HEK293 (cell line): ENCODE measurements at regions of chr11 and their contacts with region 1.

Region 1: DNA sequence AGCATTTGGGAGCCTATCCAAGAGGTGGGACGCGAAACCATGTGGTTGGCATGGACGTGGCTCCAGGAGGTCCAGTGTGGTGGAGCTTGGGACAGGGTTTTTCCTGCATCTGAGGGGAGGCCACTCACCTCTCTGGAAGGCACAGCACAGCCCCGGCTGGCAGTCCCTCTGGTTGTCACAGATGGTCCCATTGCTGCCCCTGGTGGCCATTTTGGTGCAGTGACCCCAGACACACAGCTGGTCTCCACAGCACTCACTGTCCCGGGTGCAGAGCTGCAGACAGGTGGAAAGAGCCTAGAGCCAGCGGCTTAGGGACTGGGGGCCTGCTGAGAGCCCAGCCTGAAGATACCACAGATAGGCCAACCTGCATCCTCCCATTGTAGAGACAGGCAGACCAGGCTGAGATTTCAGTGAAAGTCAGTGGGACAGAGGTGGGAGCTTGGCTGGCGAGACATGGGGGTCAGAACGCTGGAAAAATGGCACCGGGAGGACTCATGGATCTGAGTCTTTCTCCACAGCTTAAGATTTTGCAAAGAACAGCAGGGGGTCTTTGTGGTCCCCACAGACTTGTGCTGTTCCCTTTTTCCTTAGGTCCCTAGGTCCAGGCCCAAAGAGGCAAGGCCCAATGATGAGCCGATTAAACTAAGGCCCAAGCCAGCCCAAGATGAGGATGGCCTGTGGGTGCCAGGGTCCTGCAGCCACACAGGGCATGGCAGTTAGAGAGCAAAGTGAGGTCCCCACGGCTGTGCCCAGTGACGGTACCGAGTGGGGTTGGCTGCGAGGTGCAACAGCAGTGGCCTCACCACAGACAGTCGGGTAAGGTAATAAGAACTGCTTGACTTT is 41.4 kb downstream of the DKK3 start:
- H3K4me3 ChIP-seq: no peak overlapping the region
- H3K27ac ChIP-seq: no peak overlapping the region
- H3K4me1 ChIP-seq: no peaks in the 10 kb centered on the region
- CTCF ChIP-seq: peak; percentile 72

Region 2: DNA sequence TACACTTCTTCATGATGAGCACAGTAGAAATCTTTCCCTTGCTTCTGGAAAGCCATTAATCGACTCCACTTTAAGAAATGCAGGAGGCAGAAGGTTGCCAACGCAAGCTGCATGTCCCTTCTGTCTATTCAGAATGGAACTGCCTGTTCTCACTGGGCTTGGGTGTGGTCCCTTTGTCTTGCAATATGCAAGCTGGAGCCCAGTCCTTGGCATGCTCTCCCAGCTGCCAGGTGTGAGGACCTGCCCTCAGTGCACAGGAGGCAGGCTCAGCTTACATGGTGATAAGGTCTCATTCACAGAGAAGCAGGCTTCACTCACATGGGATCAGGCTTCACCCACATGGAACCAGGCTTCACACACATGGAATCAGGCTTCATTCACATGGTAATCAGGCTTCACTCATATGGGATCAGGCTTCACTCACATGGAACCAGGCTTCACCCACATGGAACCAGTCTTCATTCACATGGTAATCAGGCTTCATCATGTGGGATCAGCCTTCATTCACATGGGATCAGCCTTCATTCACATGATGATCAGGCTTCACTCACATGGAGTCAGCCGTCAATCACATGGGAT is 184.4 kb before region 1 on chr11:
- CTCF ChIA-PET with region 1: no interaction called
- POLR2A ChIA-PET with region 1: no interaction called
- H3K4me3 ChIP-seq: no peak overlapping the region
- H3K27ac ChIP-seq: no peak overlapping the region
- H3K4me1 ChIP-seq: no peaks in the 10 kb centered on the region
- CTCF ChIP-seq: no peak

Region 3: DNA sequence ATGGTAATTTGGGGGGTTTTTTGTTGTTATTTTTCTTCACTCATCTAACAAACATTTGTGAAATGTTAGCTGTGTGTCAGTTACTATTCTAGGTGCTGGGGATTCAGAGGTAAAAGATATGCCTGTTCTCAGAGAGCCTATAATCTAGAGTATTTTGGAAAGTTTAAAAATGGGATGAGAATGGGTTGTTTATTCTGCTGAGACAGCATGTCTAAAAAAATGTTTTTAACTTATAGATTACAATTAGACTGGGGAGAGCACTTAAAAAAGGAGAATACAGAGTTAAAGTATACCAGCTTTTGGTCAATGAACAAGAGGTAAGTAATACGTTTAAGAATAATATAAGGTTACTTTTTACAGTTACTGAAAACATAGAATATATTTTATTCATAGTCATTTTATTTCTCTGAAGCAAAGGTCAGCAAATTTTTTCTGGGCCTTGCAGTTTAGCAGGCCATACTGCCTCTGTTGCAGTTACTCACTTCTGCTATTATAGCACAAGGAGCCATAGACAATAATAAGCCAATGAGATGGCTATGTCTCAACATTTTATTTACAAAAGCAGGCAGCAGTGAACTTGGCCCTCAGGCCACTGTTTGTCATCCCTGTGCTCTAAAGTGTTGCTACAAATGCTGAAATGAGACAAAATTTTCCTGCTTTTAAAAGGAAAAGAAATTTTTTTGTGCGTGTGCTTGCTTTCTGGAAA is 18.7 kb before region 1 on chr11:
- CTCF ChIA-PET with region 1: interaction called, 13 read pairs
- POLR2A ChIA-PET with region 1: no interaction called
- H3K4me3 ChIP-seq: no peak overlapping the region
- H3K27ac ChIP-seq: no peak overlapping the region
- H3K4me1 ChIP-seq: no peaks in the 10 kb centered on the region
- CTCF ChIP-seq: no peak

Region 4: GRCh38 chr11:11977206-11977938 is 10.3 kb after region 1 on chr11:
- CTCF ChIA-PET with region 1: interaction called, 57 read pairs
- POLR2A ChIA-PET with region 1: interaction called, 3 read pairs
- H3K4me3 ChIP-seq: no peak overlapping the region
- H3K27ac ChIP-seq: no peak overlapping the region
- H3K4me1 ChIP-seq: no peaks in the 10 kb centered on the region
- CTCF ChIP-seq: no peak

Region 5: DNA sequence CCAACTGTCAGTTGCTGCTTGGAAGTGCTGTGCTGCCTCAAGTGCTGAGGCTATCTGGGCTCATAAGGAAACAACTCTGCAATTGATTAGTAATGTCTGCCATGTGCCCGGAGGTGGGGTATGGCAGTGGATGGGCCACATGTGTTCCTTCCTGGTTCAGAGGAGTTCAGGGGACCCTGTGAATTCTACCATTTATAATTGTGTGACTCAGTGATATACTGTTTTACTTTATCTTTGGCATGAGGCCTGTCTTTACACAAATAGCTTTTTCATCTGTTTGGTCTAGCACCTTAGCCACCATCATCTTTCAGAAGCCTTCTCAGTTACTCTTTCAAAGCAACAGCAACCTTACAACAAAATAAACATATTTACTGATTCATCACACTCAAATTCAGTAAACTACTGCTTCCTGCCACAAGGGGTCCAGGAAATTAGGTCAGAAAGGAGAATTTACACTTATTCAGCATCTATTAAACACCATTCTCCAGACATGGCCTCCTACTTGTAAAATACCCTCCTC is 20.5 kb after region 1 on chr11:
- CTCF ChIA-PET with region 1: interaction called, 13 read pairs
- POLR2A ChIA-PET with region 1: no interaction called
- H3K4me3 ChIP-seq: no peak overlapping the region
- H3K27ac ChIP-seq: no peak overlapping the region
- H3K4me1 ChIP-seq: no peaks in the 10 kb centered on the region
- CTCF ChIP-seq: no peak

Region 6: DNA sequence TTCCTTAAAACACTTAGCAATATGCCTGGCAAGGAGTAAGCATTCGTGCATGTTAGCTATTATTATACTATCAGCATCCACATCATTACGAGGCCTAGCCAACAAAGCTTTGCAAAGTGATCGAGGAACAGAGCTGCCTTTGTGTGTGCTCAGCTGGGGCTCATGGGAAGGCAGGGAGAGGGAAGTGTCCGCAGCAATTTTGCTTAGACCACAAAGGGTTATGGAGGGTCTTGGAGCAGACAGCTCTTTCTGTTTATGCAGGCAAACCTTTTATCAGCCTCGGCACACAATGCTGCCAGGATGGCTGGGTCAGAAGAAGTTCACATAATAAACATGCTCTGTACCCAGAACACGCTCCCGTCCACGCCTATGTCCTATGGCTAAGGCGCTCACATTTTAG is 52.3 kb after region 1 on chr11:
- CTCF ChIA-PET with region 1: interaction called, 10 read pairs
- POLR2A ChIA-PET with region 1: no interaction called
- H3K4me3 ChIP-seq: no peak overlapping the region
- H3K27ac ChIP-seq: no peak overlapping the region
- H3K4me1 ChIP-seq: no peaks in the 10 kb centered on the region
- CTCF ChIP-seq: no peak

Region 7: DNA sequence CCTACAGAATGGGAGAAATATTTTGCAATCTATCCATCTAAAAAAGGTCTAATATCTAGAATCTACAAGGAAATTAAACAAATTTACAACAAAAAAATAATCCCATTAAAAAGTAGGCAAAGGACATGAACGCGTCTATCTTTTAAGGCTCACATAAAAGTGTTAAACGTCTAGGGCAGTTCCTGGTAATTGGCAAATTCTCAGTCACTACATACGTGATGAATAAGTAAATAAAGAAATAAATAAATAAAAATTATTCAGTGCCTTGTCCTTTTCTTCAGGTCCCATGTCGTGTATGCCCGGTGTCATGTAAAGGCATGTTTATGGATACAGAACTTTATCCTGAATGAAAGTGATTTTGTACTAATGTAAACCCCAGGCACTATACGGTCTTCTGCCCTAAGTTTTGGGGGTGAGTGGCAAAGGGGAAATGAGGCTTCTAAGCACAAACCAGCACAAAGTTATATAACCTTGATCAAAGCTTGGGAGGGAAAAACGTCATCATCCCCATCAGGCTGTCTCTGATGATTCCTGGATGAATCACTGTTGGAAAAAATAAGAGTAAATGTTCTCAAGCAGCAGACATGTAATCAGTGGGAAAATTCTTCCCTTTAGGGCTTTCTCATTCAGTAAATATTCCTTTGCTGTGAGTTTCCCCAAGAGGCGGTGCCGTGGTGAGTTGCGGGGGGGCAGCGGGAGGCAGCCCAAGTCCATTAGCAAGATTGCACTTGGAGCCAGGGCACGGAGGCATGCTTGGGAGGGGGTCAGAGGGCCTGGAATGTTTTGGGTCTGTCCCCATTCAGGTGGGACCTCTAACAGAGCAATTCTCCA is 112.9 kb after region 1 on chr11:
- CTCF ChIA-PET with region 1: no interaction called
- POLR2A ChIA-PET with region 1: no interaction called
- H3K4me3 ChIP-seq: no peak overlapping the region
- H3K27ac ChIP-seq: no peak overlapping the region
- H3K4me1 ChIP-seq: no peaks in the 10 kb centered on the region
- CTCF ChIP-seq: no peak

Region 8: GRCh38 chr11:12963792-12964536 is 996.9 kb after region 1 on chr11:
- CTCF ChIA-PET with region 1: no interaction called
- POLR2A ChIA-PET with region 1: no interaction called
- H3K4me3 ChIP-seq: no peak overlapping the region
- H3K27ac ChIP-seq: no peak overlapping the region
- H3K4me1 ChIP-seq: no peaks in the 10 kb centered on the region
- CTCF ChIP-seq: 0 out of 2 replicates have a peak, but pooled peaks have one; percentile 35